ENCODE measurements at regions of chr18 and their contacts with region 1.

Region 1: DNA sequence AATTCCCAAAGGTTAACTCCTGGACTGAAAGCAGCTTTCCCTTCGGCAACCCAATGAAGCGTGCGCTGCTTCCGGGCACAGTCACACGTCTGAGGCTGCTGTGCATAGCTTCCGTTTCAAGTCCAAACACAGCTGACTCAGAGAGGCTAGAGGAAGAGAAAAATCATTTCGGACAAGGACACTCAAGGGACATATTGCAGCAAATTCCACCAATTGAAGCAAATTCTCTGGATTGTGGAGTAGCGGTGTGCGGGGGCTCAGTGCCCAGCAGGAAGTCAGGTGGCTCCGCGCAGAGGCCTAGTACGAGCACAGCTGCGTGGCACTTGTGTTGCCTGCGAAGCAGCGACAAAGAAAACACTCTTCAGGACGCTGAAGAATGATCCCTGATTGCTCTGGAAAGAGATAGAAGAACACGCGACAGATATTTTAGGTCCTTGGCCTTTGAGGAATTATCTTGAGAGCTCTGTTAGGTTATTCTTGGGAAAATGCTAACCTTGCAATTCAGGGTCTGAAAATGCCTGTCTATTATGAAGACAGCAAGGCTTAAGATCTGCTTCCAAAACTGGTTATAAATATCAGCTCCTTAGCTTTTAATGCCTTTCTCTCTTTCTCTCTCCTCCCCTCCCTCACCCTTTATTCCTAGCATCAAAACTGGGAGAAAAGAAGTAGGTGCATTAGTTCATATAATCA is 352.6 kb upstream of the DLGAP1 start:
- DNase-seq: no peak
- ATAC-seq: no peak

Region 2: DNA sequence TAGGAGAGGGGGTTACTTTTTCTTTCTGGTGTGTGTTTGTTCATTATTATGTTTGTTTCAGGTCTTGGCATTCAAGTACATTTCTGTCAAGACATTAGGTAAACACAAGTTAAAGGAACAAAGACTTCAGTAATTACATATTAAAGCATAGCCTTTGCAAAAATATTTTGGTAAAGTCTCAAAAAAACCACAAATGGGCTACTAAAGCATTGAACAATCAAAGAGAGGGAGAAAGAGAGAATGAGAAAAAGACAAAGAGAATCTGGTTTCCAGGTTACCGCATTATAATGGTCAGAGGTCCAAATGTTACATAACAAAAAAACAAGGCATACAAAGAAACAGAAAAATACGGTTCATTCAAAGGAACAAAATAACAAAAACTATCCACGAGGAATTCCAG is 61.4 kb after region 1 on chr18:
- intact Hi-C with region 1: loop called in 1 of 2 experiments (anchors 10 kb)
- DNase-seq: no peak
- ATAC-seq: no peak